ENCODE measurements at regions of chr5 and their contacts with region 1.

Region 1: GRCh38 chr5:116521173-116521872 is 53.3 kb downstream of the SEMA6A start:
- DNase-seq: no peak
- ATAC-seq: no peak
- H3K4me3 ChIP-seq: no peak overlapping the region
- H3K27ac ChIP-seq: no peak overlapping the region
- H3K4me1 ChIP-seq: peaks cover 0 to 7% of the 10 kb centered on the region in 2 experiments; a peak in 1 of 4 replicates
- H3K27me3 ChIP-seq: no peaks in the 10 kb centered on the region
- CTCF ChIP-seq: no peak
- POLR2A ChIP-seq: no peak
- RAD21 ChIP-seq: no peak

Region 2: DNA sequence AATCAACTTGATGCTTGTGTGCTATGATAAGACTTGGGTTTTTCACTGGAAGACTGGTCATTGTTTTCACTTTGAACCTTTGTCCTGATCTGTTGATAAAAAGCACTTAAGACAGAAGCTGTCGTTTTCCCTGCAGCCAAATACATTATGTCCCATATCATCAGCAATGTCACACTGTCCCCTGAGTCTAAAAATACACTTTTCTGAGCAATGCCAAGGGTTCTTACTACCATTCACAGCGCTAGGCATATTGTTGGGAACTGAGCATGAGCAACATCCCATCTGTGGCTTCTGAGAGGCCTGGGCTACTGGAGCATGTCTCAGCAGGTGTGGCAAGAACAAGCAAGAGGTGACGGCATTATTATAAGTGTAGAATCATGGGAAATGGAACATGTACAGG is 28.5 kb before region 1 on chr5:
- CTCF ChIA-PET with region 1: no interaction called
- POLR2A ChIA-PET with region 1: no interaction called
- RAD21 ChIA-PET with region 1: no interaction called
- intact Hi-C with region 1: loop called (anchors 1 kb)
- DNase-seq: no peak
- ATAC-seq: no peak
- H3K4me3 ChIP-seq: no peak overlapping the region
- H3K27ac ChIP-seq: no peak overlapping the region
- H3K4me1 ChIP-seq: no peaks in the 10 kb centered on the region
- H3K27me3 ChIP-seq: no peaks in the 10 kb centered on the region
- CTCF ChIP-seq: no peak
- POLR2A ChIP-seq: no peak
- RAD21 ChIP-seq: no peak